Mammary epithelial cell (primary cell): ENCODE measurements at regions of chr11 and their contacts with region 1.

Region 1: DNA sequence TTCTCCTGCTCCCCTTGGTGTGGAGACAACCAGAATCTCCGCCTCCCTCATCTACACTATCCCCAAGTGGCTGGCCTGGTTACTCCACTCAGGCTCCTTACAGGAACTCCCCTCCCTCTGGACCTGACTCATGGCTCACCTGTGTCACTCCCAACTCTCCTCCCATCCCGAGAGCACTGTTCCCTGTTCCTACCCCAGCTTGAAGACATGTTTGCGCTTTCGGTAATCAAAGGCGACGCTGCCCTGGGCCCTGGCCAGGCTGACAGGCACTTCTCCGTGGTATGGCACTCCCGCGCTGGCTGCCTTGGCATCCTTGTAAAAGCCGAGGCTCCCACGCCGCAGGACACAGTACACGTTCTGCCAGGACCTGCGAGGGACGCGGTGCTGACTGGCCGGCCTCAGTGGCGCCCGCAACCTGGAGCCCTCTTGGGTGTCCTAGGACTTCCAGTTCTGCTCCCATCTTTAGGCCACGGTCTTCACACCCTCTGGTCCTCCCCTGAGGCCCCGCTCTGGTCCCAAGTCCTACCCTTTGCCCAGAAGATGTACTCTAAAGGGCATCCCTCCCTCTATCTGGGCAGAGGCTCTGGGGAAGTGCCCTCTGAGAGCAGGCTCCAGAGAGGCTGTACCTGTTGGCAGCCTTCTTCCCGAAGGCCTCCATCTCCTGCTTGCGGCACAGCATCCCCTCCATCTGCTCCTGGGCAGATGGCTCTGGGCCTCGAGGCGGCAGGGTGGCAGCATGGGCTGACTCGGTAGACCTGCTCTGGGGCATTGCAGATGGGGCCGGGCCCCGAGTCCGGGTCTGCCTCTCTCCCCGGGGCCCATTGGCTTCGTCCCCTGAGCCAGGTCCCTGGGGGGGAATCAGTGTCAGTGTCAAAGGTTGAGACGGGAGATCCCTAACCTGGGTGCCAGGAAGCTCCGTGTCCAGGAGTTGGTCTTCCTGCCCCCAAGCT is 9.4 kb upstream of the RBM4B start:
- DNase-seq: peak; percentile 88
- H3K4me3 ChIP-seq: peak overlapping the region in 2 of 3 experiments; percentile 31 to 39
- H3K27ac ChIP-seq: peak overlapping the region; percentile 90
- H3K4me1 ChIP-seq: peaks cover 26% of the 10 kb centered on the region
- H3K27me3 ChIP-seq: no peaks in the 10 kb centered on the region
- CTCF ChIP-seq: peak in 1 of 2 donors; percentile 22

Region 2: DNA sequence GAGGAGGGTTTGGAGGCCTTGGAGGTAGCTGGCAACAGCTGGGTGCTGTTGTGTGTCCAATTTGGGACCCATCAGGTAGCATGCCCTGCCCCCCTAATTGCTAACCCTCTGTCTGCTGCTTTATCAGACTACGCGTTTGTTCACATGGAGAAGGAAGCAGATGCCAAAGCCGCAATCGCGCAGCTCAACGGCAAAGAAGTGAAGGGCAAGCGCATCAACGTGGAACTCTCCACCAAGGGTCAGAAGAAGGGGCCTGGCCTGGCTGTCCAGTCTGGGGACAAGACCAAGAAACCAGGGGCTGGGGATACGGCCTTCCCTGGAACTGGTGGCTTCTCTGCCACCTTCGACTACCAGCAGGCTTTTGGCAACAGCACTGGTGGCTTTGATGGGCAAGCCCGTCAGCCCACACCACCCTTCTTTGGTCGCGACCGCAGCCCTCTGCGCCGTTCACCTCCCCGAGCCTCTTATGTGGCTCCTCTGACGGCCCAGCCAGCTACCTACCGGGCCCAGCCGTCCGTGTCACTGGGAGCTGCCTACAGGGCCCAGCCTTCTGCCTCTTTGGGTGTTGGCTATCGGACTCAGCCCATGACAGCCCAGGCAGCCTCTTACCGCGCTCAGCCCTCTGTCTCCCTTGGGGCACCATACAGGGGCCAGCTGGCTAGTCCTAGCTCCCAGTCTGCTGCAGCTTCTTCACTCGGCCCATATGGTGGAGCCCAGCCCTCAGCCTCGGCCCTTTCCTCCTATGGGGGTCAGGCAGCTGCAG is 62.8 kb before region 1 on chr11:
- CTCF ChIA-PET with region 1: no interaction called
- dilution Hi-C with region 1: loop called (anchors 5 kb)
- in situ Hi-C with region 1: no loop called
- intact Hi-C with region 1: no loop called
- DNase-seq: no peak
- H3K4me3 ChIP-seq: no peak overlapping the region
- H3K27ac ChIP-seq: no peak overlapping the region
- H3K4me1 ChIP-seq: peaks cover 8% of the 10 kb centered on the region
- H3K27me3 ChIP-seq: no peaks in the 10 kb centered on the region
- CTCF ChIP-seq: no peak

Region 3: GRCh38 chr11:66744485-66745340 is 57.6 kb after region 1 on chr11:
- CTCF ChIA-PET with region 1: no interaction called
- dilution Hi-C with region 1: no loop called
- in situ Hi-C with region 1: no loop called
- intact Hi-C with region 1: loop called (anchors 2 kb)
- DNase-seq: peak; percentile 82
- H3K4me3 ChIP-seq: peak overlapping the region; percentile 66 to 97 (median 84)
- H3K27ac ChIP-seq: peak overlapping the region; percentile 92
- H3K4me1 ChIP-seq: peaks cover 28% of the 10 kb centered on the region
- H3K27me3 ChIP-seq: no peaks in the 10 kb centered on the region
- CTCF ChIP-seq: no peak

Region 4: GRCh38 chr11:66768088-66768521 is 81.0 kb after region 1 on chr11:
- CTCF ChIA-PET with region 1: no interaction called
- dilution Hi-C with region 1: no loop called
- in situ Hi-C with region 1: no loop called
- intact Hi-C with region 1: no loop called
- DNase-seq: peak; percentile 83
- H3K4me3 ChIP-seq: no peak overlapping the region
- H3K27ac ChIP-seq: peak overlapping the region; percentile 60
- H3K4me1 ChIP-seq: peaks cover 20% of the 10 kb centered on the region
- H3K27me3 ChIP-seq: no peaks in the 10 kb centered on the region
- CTCF ChIP-seq: no peak

Region 5: DNA sequence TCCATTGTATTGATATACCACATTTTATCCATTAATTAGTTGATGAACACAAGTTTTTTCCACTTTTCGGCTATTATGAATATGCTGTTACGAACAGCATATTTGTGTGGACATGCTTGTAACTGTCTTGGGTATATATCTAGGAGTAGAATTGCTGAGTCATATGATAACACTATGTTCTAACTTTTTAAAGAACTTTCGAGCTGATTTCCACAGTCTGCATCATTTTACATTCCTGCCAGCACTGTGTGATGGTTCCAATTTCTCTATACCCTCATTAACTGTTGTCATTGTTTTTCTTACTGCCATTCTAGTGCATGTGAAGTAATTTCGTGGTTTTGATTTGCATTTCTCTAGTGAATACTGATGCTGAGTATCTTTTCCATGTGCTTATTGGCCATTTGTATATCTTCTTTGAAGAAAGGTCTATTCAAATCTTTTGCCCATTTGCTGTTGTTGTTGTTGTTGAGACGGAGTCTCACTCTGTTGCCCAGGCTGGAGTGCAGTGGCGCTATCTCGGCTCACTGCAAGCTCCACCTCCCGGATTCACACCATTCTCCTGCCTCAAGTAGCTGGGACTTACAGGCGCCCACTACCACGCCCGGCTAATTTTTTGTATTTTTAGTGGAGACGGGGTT is 148.8 kb after region 1 on chr11:
- CTCF ChIA-PET with region 1: no interaction called
- dilution Hi-C with region 1: no loop called
- in situ Hi-C with region 1: loop called (anchors 5 kb)
- intact Hi-C with region 1: loop called (anchors 2 kb)
- DNase-seq: no peak
- H3K4me3 ChIP-seq: no peak overlapping the region
- H3K27ac ChIP-seq: no peak overlapping the region
- H3K4me1 ChIP-seq: no peaks in the 10 kb centered on the region
- H3K27me3 ChIP-seq: no peaks in the 10 kb centered on the region
- CTCF ChIP-seq: no peak